Aorta (tissue), 5 donors: ENCODE measurements at regions of chr2 and their contacts with region 1.

Region 1: DNA sequence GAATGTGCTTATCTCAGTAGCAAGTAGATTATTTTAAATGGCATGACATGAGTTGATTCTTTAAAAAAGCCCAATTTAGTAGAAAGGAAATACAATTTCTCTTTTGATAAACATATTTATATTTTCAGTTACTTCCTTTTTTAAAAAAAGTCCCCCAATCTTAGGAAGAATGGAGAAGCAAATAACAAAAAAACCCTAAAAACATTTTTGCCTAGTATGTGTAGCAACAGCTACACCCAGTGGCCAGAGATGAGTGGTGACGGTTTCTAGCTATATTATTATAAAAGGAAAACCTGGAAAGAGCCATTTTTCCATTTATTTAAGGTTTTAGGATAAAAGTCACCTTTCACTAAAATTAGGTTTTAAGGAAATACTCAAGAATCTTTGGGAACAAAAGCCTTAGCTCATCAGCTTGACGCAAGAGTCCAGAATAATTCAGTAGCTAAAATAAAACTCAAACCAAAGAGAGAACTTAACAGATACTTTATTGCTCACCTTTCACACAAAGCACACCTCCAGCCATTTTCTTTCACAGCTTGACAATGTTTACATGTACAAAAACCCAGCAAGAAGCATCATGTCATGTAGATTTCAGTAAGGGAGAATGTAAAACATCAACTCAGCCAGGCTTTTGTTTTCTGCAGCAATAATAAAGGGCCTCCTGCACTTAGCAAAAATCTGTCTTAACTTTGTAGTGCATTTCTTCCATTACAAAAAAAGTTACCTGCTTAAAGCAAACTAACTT is 15.7 kb downstream of the FAM98A start:
- DNase-seq: no peak
- ATAC-seq: peak; percentile 81
- H3K4me3 ChIP-seq: no peak overlapping the region
- H3K27ac ChIP-seq: no peak overlapping the region
- H3K4me1 ChIP-seq: peaks cover 0 to 2% of the 10 kb centered on the region in 2 donors
- H3K27me3 ChIP-seq: no peaks in the 10 kb centered on the region

Region 2: DNA sequence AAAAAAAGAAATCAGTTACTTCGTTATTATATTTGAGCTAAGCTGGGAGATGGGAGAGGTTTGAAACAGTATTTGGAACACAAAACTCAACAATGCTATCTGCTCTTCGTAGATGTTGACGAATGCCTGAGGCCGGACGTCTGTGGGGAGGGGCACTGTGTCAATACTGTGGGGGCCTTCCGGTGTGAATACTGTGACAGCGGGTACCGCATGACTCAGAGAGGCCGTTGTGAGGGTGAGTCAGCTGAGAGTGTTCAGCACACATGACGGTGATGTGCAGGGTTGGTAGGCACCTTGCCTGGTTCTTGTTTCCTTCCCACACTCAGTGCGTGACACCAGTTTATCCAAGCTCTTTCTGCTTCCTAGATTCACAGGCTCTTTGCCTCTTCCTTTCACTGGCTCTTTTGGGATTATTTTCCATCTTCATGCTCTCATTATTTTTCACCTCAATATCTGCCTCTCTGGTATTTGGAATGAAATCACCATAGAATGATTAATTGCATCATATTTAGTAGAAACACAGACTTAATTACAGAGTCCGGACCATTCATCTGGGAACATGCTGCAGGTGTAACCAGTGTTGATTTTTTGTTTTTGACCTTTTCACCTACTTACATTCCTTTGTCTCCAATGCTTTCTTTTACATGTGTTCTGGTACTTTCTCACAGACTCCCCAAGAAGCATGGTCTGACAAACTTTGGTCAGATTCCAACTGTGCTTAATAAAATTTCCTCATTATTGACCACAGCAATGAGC is 307.5 kb before region 1 on chr2:
- intact Hi-C with region 1: loop called in 1 of 2 experiments (anchors 10 kb)
- DNase-seq: peak; percentile 86 to 88
- ATAC-seq: peak; percentile 77
- H3K4me3 ChIP-seq: no peak overlapping the region
- H3K27ac ChIP-seq: peak overlapping the region; percentile 58 to 85
- H3K4me1 ChIP-seq: peaks cover 2 to 3% of the 10 kb centered on the region in 2 donors
- H3K27me3 ChIP-seq: no peaks in the 10 kb centered on the region

Region 3: DNA sequence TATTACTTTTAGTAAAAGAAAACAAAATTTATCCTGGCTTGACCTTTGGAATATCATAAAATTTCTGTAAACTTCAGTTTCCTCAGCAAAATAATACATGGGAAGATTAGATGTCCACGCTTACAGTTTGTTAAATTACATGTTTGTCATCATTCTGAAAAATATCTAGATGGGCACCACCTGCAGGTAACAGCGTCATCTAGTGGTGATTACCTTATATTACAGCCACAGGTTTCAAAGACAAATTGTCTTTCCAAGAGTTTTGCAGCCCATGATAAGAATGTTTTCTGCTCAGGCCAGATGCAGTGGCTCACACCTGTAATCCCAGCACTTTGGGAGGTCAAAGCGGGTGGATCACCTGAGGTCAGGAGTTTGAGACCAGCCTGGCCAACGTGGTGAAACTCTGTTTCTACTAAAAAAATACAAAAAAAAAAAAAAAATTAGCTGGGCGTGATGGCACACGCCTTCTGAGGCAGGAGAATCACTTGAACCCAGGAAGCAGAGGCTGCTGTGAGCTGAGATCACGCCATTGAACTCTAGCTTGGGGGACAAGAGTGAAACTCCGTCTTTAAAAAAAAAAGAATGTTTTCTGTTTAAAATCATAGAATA is 203.3 kb before region 1 on chr2:
- intact Hi-C with region 1: loop called in 1 of 2 experiments (anchors 10 kb)
- DNase-seq: no peak
- ATAC-seq: no peak
- H3K4me3 ChIP-seq: no peak overlapping the region
- H3K27ac ChIP-seq: no peak overlapping the region
- H3K4me1 ChIP-seq: peaks cover 3 to 7% of the 10 kb centered on the region in 2 donors
- H3K27me3 ChIP-seq: no peaks in the 10 kb centered on the region

Region 4: GRCh38 chr2:33475224-33476130 is 107.9 kb before region 1 on chr2:
- intact Hi-C with region 1: loop called (anchors 5 kb)
- DNase-seq: peak; percentile 86 to 89
- ATAC-seq: peak; percentile 91
- H3K4me3 ChIP-seq: peak overlapping the region; percentile 60 to 100
- H3K27ac ChIP-seq: peak overlapping the region in 1 of 2 donors; percentile 88
- H3K4me1 ChIP-seq: no peaks in the 10 kb centered on the region
- H3K27me3 ChIP-seq: no peaks in the 10 kb centered on the region